Activated naive CD8-positive, alpha-beta T cell treated with anti-CD3 and anti-CD28 coated beads, Interleukin-2, amount 10 ng/mL, durations not matched to agents 7 days and 5 days (primary cell): ENCODE measurements at regions of chr5 and their contacts with region 1.

Region 1: DNA sequence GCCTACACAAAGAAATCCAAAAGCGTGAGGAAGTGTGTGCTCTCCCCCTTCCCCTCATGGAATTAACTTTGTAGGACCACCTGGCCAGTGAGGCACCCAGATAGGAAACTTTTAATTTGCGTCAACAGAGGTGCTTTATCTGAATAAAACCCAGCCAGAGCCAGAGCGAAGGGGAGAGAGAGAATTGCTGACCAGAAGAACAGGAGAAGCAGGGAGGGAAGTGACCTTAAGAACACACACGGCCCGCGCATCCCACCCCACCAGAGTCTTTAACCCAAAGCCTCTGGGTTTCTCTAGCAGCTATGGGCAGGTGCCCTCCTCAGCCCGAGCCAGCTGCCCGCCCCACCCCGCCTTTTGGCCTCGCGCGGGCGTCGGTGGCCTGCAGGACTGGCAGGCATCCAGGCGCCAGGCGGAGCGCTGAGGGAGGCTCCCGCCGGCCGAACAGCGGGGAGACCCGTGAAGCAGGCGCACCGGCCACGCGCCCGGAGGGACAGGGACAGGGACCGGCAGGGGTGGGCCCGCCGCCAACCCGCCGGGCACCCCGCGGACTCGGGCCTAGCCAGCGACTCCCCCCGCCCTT is 580 bp downstream of the ERAP1 start:
- DNase-seq: no peak
- ATAC-seq: peak; percentile 15
- H3K4me3 Mint-ChIP-seq: peak overlapping the region; percentile 97
- H3K27ac Mint-ChIP-seq: peak overlapping the region; percentile 100
- H3K4me1 Mint-ChIP-seq: peaks cover 58% of the 10 kb centered on the region
- H3K27me3 Mint-ChIP-seq: no peaks in the 10 kb centered on the region

Region 2: DNA sequence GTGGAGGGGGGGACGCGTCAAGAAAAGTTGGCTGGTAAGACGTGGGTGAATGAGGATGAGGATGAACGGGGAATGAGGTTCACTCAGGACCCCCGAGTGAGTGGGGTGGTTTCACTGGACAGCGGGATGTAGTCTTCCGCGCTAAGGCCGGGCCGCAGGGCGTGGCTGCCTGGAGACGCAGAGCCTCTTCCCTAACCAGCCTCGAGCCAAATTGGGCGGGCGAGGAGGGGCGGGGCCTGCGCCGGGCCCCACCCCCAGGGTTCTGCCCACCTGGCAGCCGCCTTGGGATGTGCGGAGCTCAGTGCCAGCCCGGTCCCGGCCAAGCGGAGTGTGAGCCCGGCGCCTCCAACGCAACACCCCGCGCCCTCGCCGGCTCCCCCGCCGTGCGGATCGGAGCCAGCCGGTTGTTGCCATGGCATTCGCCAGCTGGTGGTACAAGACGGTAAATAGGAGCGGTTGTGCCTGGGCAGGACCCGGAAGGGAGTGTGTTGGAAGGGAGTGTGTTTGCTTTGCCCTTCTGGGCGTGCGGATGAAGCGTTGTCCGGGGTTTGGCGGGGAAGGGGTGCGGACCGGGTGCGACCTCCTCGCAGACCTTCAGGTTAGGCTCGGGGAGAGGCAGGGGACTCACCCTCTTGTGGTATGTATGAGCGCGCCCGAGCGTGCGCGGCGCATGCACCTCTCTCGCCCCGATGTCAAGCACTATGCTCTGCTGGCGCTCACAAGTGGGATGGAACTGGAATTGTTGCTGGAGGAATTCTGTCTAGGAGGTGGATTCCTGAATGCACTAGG is 144.2 kb before region 1 on chr5:
- POLR2A ChIA-PET with region 1: interaction called, 22 read pairs
- DNase-seq: peak; percentile 92
- ATAC-seq: peak; percentile 73
- H3K4me3 Mint-ChIP-seq: peak overlapping the region; percentile 99
- H3K27ac Mint-ChIP-seq: peak overlapping the region; percentile 98
- H3K4me1 Mint-ChIP-seq: peaks cover 31% of the 10 kb centered on the region
- H3K27me3 Mint-ChIP-seq: peaks cover 10% of the 10 kb centered on the region

Region 3: DNA sequence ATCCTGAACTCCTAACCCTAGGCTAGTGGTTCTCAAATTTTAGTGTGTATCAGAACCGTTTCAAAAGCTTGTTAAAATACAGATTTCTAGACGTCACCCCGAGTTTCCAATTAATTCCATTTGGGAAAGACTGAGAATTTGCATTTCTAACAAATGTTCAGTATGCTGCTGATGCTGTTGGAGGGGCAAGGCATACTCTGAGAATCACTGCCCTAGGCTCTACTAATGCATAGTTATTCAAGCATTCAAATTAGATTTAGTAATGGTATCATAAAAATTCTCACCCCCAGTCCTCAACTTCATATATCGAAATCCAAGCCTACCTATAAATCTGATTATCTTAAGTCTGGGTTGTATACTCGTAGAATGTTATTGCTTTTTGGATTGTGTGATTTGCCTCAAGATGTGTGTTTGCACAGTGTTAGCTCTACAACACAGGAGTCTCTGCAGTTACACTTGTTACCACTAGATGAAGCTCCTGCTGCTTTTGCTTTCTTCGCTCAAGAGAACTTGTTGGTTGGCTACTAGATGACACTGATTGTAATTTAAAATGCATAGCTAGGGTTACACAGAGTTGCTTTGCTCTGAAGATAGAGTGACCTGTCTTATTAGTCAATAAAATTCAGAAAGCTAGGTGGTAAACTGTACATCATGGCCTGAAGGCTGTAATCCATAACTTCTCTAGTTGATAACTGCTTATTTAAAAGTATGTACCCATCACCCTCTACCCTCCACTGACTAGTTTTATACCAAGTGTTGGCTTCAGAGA is 61.6 kb after region 1 on chr5:
- POLR2A ChIA-PET with region 1: interaction called, 24 read pairs
- DNase-seq: no peak
- ATAC-seq: peak; percentile 92
- H3K4me3 Mint-ChIP-seq: no peak overlapping the region
- H3K27ac Mint-ChIP-seq: no peak overlapping the region
- H3K4me1 Mint-ChIP-seq: peaks cover 45% of the 10 kb centered on the region
- H3K27me3 Mint-ChIP-seq: no peaks in the 10 kb centered on the region

Region 4: GRCh38 chr5:96876292-96876850 is 69.2 kb after region 1 on chr5 and contains the start of gene ERAP2:
- POLR2A ChIA-PET with region 1: interaction called, 24 read pairs
- DNase-seq: no peak
- ATAC-seq: peak; percentile 69
- H3K4me3 Mint-ChIP-seq: peak within 1 kb of the TSS; percentile 92
- H3K27ac Mint-ChIP-seq: peak within 1 kb of the TSS; percentile 96
- H3K4me1 Mint-ChIP-seq: peaks cover 57% of the 10 kb centered on the region
- H3K27me3 Mint-ChIP-seq: no peaks in the 10 kb centered on the region
- total RNA-seq, gene ERAP2: 107 to 110 TPM

Region 5: GRCh38 chr5:96896806-96897205 is 89.6 kb after region 1 on chr5:
- POLR2A ChIA-PET with region 1: interaction called, 12 read pairs
- DNase-seq: no peak
- ATAC-seq: no peak
- H3K4me3 Mint-ChIP-seq: peak overlapping the region; percentile 81
- H3K27ac Mint-ChIP-seq: peak overlapping the region; percentile 92
- H3K4me1 Mint-ChIP-seq: peaks cover 36% of the 10 kb centered on the region
- H3K27me3 Mint-ChIP-seq: no peaks in the 10 kb centered on the region

Region 6: DNA sequence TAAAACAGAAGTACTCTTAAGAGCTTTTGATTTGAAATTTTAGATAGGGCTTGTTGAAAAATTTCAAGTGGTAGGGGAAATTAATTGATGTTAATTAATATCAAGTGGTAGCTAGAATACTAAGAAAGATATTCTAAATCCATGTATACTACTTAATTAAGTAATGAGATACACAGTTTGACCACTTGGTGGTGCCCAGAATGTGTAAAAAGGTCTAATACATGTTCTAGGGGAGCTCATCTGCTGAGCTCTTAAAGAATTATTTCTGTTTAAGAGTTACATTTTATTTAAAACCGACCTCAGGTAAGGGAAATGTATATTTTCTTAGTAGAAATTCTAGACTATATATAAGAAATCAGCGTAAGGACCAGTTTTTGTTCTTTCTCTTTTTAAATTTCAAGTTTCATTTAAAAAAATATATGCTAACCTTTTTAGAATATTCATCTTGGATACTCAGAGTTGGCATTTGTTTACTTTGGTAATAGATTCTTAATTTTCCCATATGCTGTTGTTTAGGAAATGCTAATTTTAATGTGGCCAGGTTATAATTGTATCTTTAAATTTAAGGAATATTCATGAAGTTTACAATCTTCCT is 190.2 kb after region 1 on chr5:
- POLR2A ChIA-PET with region 1: no interaction called
- DNase-seq: no peak
- ATAC-seq: peak; percentile 46
- H3K4me3 Mint-ChIP-seq: no peak overlapping the region
- H3K27ac Mint-ChIP-seq: no peak overlapping the region
- H3K4me1 Mint-ChIP-seq: peaks cover 36% of the 10 kb centered on the region
- H3K27me3 Mint-ChIP-seq: no peaks in the 10 kb centered on the region